ENCODE measurements at regions of chr22 and their contacts with region 1.

Region 1: DNA sequence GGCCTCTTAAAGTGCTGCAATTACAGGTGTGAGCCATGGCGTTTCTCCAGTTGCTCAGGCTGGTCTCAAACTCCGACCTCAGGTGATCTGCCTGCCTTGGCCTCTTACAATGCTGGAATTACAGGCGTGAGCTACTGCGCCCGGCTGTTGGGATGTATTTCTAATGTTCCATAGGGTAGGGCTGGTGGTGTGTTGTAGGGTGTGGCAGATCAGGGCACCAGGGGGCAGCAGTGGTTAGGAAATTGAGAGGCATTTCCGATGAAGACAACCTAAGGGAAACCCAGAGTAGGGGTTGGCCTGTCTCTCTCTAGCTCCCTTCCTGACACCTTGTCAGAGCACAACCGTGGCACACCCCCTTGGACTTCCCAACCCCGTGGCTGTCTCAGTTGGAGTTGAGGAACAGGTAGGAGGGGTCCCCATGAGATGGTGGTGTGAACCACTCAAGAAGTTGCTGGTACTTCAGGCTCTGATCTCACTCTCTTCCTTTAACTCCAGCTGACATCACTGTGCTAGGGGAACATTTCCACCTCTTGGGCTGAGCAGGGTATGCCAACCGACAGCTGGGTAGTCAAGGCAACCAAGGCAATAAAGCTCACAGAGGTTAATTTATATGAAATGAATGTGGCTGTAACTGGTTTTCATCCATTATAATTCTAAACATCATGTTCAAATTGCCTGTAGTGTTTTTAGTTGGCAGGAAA is 33.0 kb downstream of the YWHAH start:
- DNase-seq: peak; percentile 94
- ATAC-seq: peak; percentile 98
- H3K4me3 Mint-ChIP-seq: no peak overlapping the region
- H3K27ac Mint-ChIP-seq: no peak overlapping the region
- H3K4me1 Mint-ChIP-seq: no peaks in the 10 kb centered on the region; the same call in 1 of the 2 replicates
- H3K27me3 Mint-ChIP-seq: no peaks in the 10 kb centered on the region
- CTCF ChIP-seq: peak; percentile 67

Region 2: GRCh38 chr22:31995046-31995445 is 17.8 kb after region 1 on chr22:
- CTCF ChIA-PET with region 1: interaction called, 58 read pairs
- POLR2A ChIA-PET with region 1: no interaction called
- DNase-seq: no peak
- ATAC-seq: peak; percentile 73
- H3K4me3 Mint-ChIP-seq: no peak overlapping the region
- H3K27ac Mint-ChIP-seq: no peak overlapping the region
- H3K4me1 Mint-ChIP-seq: no peaks in the 10 kb centered on the region
- H3K27me3 Mint-ChIP-seq: no peaks in the 10 kb centered on the region
- CTCF ChIP-seq: no peak; the same call in 1 of the 2 replicates

Region 3: GRCh38 chr22:32050678-32051515 is 73.6 kb after region 1 on chr22:
- CTCF ChIA-PET with region 1: interaction called, 21 read pairs
- POLR2A ChIA-PET with region 1: no interaction called
- DNase-seq: no peak
- ATAC-seq: peak; percentile 64
- H3K4me3 Mint-ChIP-seq: no peak overlapping the region
- H3K27ac Mint-ChIP-seq: peak overlapping the region; percentile 48; the same call in 1 of the 2 replicates
- H3K4me1 Mint-ChIP-seq: peaks cover 20% of the 10 kb centered on the region
- H3K27me3 Mint-ChIP-seq: peaks cover 15% of the 10 kb centered on the region
- CTCF ChIP-seq: no peak

Region 4: GRCh38 chr22:32080904-32081303 is 103.6 kb after region 1 on chr22:
- CTCF ChIA-PET with region 1: interaction called, 137 read pairs
- POLR2A ChIA-PET with region 1: no interaction called
- DNase-seq: peak; percentile 27
- ATAC-seq: peak; percentile 94
- H3K4me3 Mint-ChIP-seq: no peak overlapping the region
- H3K27ac Mint-ChIP-seq: no peak overlapping the region
- H3K4me1 Mint-ChIP-seq: no peaks in the 10 kb centered on the region
- H3K27me3 Mint-ChIP-seq: peaks cover 2% of the 10 kb centered on the region; the same call in 1 of the 2 replicates
- CTCF ChIP-seq: peak; percentile 57

Region 5: GRCh38 chr22:32265882-32266767 is 288.8 kb after region 1 on chr22:
- CTCF ChIA-PET with region 1: interaction called, 19 read pairs
- POLR2A ChIA-PET with region 1: no interaction called
- DNase-seq: peak; percentile 71
- ATAC-seq: peak; percentile 85
- H3K4me3 Mint-ChIP-seq: no peak overlapping the region
- H3K27ac Mint-ChIP-seq: peak overlapping the region; percentile 39
- H3K4me1 Mint-ChIP-seq: peaks cover 9% of the 10 kb centered on the region
- H3K27me3 Mint-ChIP-seq: no peaks in the 10 kb centered on the region; the same call in 1 of the 2 replicates
- CTCF ChIP-seq: peak; percentile 89